Endothelial cell of umbilical vein (primary cell): ENCODE measurements at regions of chr21 and their contacts with region 1.

Region 1: GRCh38 chr21:27648560-27648959 is 681.7 kb upstream of the ADAMTS5 start:
- DNase-seq: peak; percentile 91
- H3K4me3 ChIP-seq: no peak overlapping the region
- H3K27ac ChIP-seq: peak overlapping the region; percentile 91
- H3K4me1 ChIP-seq: peaks cover 34% of the 10 kb centered on the region
- H3K27me3 ChIP-seq: no peaks in the 10 kb centered on the region
- CTCF ChIP-seq: no peak
- POLR2A ChIP-seq: no peak

Region 2: GRCh38 chr21:27448960-27449359 is 199.6 kb before region 1 on chr21:
- CTCF ChIA-PET with region 1: no interaction called
- POLR2A ChIA-PET with region 1: no interaction called
- dilution Hi-C with region 1: no loop called
- intact Hi-C with region 1: loop called (anchors 1 kb)
- DNase-seq: peak; percentile 95
- H3K4me3 ChIP-seq: no peak overlapping the region
- H3K27ac ChIP-seq: no peak overlapping the region
- H3K4me1 ChIP-seq: no peaks in the 10 kb centered on the region
- H3K27me3 ChIP-seq: no peaks in the 10 kb centered on the region
- CTCF ChIP-seq: no peak
- POLR2A ChIP-seq: no peak

Region 3: DNA sequence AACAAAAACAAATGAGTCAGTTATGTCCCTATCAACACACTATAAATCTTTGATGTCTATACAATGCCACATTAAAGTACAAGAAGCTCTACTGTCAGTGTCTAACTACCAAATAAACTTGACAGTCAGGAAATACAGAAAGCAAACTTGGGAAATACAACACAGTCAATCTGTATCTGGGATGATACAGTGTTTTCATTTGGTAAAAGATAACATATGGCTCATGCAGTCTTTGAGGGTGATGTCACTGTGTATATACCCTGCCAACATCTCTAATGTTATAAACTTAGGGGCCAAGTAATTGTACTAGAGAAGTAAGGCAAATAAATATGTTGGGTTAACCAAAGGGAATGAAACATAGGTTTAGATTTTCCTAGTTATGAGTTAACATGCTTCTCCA is 129.2 kb before region 1 on chr21:
- CTCF ChIA-PET with region 1: no interaction called
- POLR2A ChIA-PET with region 1: no interaction called
- dilution Hi-C with region 1: no loop called
- intact Hi-C with region 1: loop called (anchors 5 kb)
- DNase-seq: peak; percentile 82
- H3K4me3 ChIP-seq: no peak overlapping the region
- H3K27ac ChIP-seq: no peak overlapping the region
- H3K4me1 ChIP-seq: peaks cover 6% of the 10 kb centered on the region
- H3K27me3 ChIP-seq: no peaks in the 10 kb centered on the region
- CTCF ChIP-seq: no peak
- POLR2A ChIP-seq: no peak

Region 4: GRCh38 chr21:27590271-27590670 is 58.3 kb before region 1 on chr21:
- CTCF ChIA-PET with region 1: no interaction called
- POLR2A ChIA-PET with region 1: no interaction called
- dilution Hi-C with region 1: no loop called
- intact Hi-C with region 1: loop called (anchors 2 kb)
- DNase-seq: peak; percentile 74
- H3K4me3 ChIP-seq: no peak overlapping the region
- H3K27ac ChIP-seq: no peak overlapping the region
- H3K4me1 ChIP-seq: no peaks in the 10 kb centered on the region
- H3K27me3 ChIP-seq: peaks cover 3 to 12% of the 10 kb centered on the region in 2 experiments
- CTCF ChIP-seq: no peak
- POLR2A ChIP-seq: no peak

Region 5: GRCh38 chr21:27681841-27682240 is 33.3 kb after region 1 on chr21:
- CTCF ChIA-PET with region 1: no interaction called
- POLR2A ChIA-PET with region 1: no interaction called
- dilution Hi-C with region 1: no loop called
- intact Hi-C with region 1: loop called (anchors 2 kb)
- DNase-seq: peak; percentile 69
- H3K4me3 ChIP-seq: no peak overlapping the region
- H3K27ac ChIP-seq: peak overlapping the region; percentile 27
- H3K4me1 ChIP-seq: peaks cover 8% of the 10 kb centered on the region
- H3K27me3 ChIP-seq: no peaks in the 10 kb centered on the region
- CTCF ChIP-seq: no peak
- POLR2A ChIP-seq: no peak

Region 6: DNA sequence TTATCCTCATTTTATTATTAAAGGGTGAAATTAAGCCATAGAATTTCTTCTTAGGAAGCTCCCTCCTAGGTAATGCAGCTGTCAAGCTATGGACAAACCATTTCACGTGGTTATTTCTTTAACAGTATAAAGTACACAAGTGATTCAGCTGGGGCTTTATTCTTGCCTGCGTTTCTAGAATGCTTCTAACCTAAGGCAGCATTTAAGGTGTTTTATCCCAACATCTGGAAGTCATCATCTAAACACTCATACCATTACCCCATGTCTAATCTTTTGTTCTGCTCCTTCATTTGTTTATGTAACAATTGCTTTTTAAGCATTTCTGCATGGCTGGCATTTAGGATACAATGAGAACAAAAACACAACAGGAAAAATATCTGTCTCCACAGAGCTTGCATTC is 147.5 kb after region 1 on chr21:
- CTCF ChIA-PET with region 1: no interaction called
- POLR2A ChIA-PET with region 1: no interaction called
- dilution Hi-C with region 1: no loop called
- intact Hi-C with region 1: no loop called
- DNase-seq: no peak
- H3K4me3 ChIP-seq: no peak overlapping the region
- H3K27ac ChIP-seq: no peak overlapping the region
- H3K4me1 ChIP-seq: no peaks in the 10 kb centered on the region
- H3K27me3 ChIP-seq: no peaks in the 10 kb centered on the region
- CTCF ChIP-seq: no peak
- POLR2A ChIP-seq: no peak

Region 7: GRCh38 chr21:28522014-28522799 is 873.6 kb after region 1 on chr21:
- CTCF ChIA-PET with region 1: no interaction called
- POLR2A ChIA-PET with region 1: no interaction called
- dilution Hi-C with region 1: no loop called
- intact Hi-C with region 1: loop called (anchors 10 kb)
- DNase-seq: peak; percentile 88
- H3K4me3 ChIP-seq: no peak overlapping the region
- H3K27ac ChIP-seq: peak overlapping the region; percentile 72
- H3K4me1 ChIP-seq: peaks cover 45% of the 10 kb centered on the region
- H3K27me3 ChIP-seq: no peaks in the 10 kb centered on the region
- CTCF ChIP-seq: peak; percentile 44 to 56
- POLR2A ChIP-seq: no peak

Region 8: DNA sequence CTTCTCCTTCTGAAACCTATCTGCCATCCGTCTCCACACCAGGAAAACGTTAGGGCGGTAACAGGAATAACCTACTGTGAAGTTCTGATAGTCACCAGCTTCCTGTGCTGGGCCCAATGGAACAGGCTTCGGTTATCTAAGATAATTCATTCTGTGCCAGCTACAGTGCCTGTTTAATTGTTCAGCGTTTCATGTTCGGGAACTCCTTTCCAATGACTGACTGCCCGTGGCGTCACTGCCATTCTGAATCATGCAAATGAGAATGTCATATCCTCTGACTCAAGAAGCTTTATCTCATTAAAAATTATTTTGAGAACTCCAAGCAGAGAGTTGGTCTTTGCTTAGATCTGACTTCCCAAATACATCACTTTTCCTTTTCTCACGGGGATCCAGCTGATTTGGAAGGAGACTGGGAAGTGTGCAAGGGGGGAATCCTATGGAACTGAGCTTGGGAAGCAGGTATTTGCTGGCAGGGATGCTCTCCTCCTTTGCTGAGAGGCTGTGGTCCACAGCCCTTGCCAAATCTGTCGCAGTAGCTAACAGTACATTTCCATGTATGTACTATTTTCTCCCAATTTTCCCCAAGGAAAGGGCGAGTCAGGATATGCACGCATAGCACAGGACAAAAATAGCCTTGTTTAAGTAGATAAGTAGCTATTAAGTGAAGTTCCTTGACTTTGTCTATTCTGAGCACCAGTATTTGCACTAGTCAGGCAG is 985.4 kb after region 1 on chr21:
- CTCF ChIA-PET with region 1: no interaction called
- POLR2A ChIA-PET with region 1: no interaction called
- dilution Hi-C with region 1: no loop called
- intact Hi-C with region 1: loop called (anchors 2 kb)
- DNase-seq: peak; percentile 94
- H3K4me3 ChIP-seq: peak overlapping the region in 1 of 3 experiments; percentile 1
- H3K27ac ChIP-seq: peak overlapping the region; percentile 97
- H3K4me1 ChIP-seq: peaks cover 59% of the 10 kb centered on the region
- H3K27me3 ChIP-seq: no peaks in the 10 kb centered on the region
- CTCF ChIP-seq: no peak
- POLR2A ChIP-seq: peak; percentile 12